Ovary (tissue), 10 donors: ENCODE measurements at regions of chr6 and their contacts with region 1.

Region 1: GRCh38 chr6:85460921-85461797 is 11.3 kb downstream of the NT5E start:
- DNase-seq: peak; percentile 66 to 86 (median 78)
- H3K4me3 ChIP-seq: no peak overlapping the region
- H3K27ac ChIP-seq: peak overlapping the region; percentile 70 to 88
- H3K4me1 ChIP-seq: peaks cover 23% of the 10 kb centered on the region
- H3K27me3 ChIP-seq: no peaks in the 10 kb centered on the region
- CTCF ChIP-seq: no peak
- EP300 ChIP-seq: no peak
- POLR2A ChIP-seq: peak; percentile 21

Region 2: GRCh38 chr6:85404502-85405174 is 56.5 kb before region 1 on chr6:
- intact Hi-C with region 1: loop called in 1 of 4 experiments (anchors 5 kb)
- DNase-seq: peak in 3 of 5 donors; percentile 29 to 47 (median 30)
- H3K4me3 ChIP-seq: no peak overlapping the region
- H3K27ac ChIP-seq: no peak overlapping the region
- H3K4me1 ChIP-seq: no peaks in the 10 kb centered on the region
- H3K27me3 ChIP-seq: no peaks in the 10 kb centered on the region
- CTCF ChIP-seq: no peak
- EP300 ChIP-seq: no peak
- POLR2A ChIP-seq: no peak